Activated B cell treated with CpG ODN at 0.5 μM for 24 hours (primary cell): ENCODE measurements at regions of chr12 and their contacts with region 1.

Region 1: DNA sequence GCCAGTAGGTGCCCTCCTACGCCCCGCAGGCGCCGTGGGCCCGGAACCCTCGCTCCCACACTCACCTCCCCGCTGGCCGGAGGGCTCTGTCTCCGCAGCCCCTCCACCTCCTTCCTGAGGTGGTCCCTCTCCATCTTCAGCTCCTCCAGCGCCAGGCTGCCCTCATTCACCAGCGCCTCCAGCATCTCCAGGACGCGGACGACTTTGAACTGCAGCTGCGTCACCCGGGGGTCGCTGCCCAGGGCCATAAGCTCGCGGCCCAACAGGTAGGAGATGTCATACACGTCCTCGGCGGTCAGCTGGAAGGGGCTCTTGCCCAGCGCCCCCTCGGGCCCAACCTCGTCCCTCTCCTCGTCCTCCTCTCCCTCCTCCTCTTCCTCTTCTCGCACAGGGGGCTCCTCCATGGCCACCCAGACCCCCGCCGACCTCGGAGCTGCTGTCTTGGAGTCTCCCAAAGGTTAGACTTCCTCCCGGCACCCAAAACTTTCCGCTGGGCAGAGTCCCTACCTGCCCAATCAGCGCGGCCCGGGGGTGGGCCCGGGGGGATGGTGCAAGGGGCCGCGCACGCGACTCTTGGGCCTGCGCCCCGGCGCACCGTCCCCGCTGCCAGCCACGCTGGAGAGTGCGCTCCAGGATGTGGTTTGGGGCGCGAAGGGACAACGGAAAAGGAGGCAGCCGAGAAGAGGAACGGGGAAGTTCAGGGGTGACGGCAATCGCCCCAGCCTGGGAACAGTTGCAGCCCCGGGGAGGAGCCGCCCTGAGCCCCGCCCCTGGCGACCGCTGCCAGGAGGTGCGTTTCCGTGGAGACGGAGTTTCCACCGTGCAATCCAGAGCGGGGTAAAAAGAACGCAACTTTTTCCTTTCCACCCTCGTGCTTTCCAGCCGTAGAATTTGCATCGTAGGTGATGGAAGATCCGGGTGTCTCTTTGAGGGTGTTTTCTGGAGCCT is at the start of gene RILPL2:
- DNase-seq: peak; percentile 93
- ATAC-seq: peak; percentile 83
- H3K4me3 Mint-ChIP-seq: peak within 1 kb of the TSS; percentile 98
- H3K27ac Mint-ChIP-seq: peak within 1 kb of the TSS; percentile 97
- H3K4me1 Mint-ChIP-seq: peaks cover 52% of the 10 kb centered on the region
- H3K27me3 Mint-ChIP-seq: no peaks in the 10 kb centered on the region
- CTCF ChIP-seq: no peak
- total RNA-seq, gene RILPL2: 11.2 and 12.2 TPM in 2 replicates

Region 2: GRCh38 chr12:123457980-123458783 is 21.9 kb after region 1 on chr12 and contains the start of gene SNRNP35:
- CTCF ChIA-PET with region 1: no interaction called
- POLR2A ChIA-PET with region 1: interaction called, 44 read pairs
- intact Hi-C with region 1: loop called (anchors 1 kb)
- DNase-seq: peak; percentile 84
- ATAC-seq: peak; percentile 79
- H3K4me3 Mint-ChIP-seq: peak within 1 kb of the TSS; percentile 100
- H3K27ac Mint-ChIP-seq: peak within 1 kb of the TSS; percentile 100
- H3K4me1 Mint-ChIP-seq: peaks cover 33% of the 10 kb centered on the region
- H3K27me3 Mint-ChIP-seq: no peaks in the 10 kb centered on the region
- CTCF ChIP-seq: no peak
- total RNA-seq, gene SNRNP35: 39.5 and 51.5 TPM in 2 replicates

Region 3: DNA sequence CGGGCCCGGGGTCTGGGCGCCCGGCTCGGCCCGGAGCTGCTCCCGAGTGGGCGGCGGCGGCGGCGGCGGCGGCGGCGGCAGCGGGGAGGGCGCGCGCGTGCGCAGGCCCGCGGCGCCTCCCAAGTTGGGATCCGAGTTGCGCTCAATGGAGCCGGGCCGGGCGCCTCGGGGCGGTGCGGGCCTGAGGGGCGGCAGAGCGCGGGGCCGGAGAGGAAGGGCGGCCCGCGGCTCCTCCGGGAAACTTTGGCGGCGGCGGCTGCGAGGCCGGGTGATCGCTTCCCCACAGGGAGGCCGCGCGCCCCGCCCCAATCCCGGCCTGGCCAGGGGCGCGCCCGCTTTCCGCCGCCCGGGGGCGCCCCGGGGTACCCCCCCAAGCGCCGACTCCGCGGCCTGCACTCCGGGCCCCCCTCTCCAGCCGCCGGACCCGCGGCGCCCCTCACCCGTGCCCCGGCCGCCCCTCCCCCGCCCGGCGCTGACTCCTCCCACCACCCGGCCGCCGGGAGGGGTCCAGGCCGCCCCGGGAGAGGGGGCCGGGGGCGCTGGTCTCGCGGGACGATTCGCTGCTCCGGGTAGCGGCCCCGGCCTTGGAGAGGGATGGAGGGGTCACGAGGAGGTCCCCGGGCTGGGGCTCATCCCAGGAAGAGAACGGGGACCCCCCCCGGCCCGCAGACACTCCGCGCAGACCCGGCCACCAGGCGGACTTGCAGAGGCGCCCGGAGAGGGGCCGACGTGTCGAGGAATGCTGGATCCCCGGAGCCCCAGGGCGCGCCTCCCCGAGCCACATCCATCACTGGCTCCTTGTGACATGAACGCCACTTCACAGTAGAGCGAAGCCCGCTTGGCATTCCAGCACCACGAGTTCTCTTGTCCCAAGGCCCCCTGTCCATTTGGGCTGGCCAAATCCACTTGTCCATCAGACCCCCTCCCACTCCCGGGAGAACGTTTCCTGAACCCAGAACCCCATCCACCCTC is 97.7 kb after region 1 on chr12 and contains the start of gene RILPL1:
- CTCF ChIA-PET with region 1: no interaction called
- POLR2A ChIA-PET with region 1: no interaction called
- intact Hi-C with region 1: loop called (anchors 2 kb)
- DNase-seq: peak; percentile 66
- ATAC-seq: peak; percentile 72
- H3K4me3 Mint-ChIP-seq: peak within 1 kb of the TSS; percentile 85
- H3K27ac Mint-ChIP-seq: no peak within 1 kb of the TSS
- H3K4me1 Mint-ChIP-seq: peaks cover 20% of the 10 kb centered on the region
- H3K27me3 Mint-ChIP-seq: no peaks in the 10 kb centered on the region
- CTCF ChIP-seq: no peak
- total RNA-seq, gene RILPL1: 0.67 and 0.69 TPM in 2 replicates